H1 (cell line): ENCODE measurements at regions of chr20 and their contacts with region 1.

Region 1: DNA sequence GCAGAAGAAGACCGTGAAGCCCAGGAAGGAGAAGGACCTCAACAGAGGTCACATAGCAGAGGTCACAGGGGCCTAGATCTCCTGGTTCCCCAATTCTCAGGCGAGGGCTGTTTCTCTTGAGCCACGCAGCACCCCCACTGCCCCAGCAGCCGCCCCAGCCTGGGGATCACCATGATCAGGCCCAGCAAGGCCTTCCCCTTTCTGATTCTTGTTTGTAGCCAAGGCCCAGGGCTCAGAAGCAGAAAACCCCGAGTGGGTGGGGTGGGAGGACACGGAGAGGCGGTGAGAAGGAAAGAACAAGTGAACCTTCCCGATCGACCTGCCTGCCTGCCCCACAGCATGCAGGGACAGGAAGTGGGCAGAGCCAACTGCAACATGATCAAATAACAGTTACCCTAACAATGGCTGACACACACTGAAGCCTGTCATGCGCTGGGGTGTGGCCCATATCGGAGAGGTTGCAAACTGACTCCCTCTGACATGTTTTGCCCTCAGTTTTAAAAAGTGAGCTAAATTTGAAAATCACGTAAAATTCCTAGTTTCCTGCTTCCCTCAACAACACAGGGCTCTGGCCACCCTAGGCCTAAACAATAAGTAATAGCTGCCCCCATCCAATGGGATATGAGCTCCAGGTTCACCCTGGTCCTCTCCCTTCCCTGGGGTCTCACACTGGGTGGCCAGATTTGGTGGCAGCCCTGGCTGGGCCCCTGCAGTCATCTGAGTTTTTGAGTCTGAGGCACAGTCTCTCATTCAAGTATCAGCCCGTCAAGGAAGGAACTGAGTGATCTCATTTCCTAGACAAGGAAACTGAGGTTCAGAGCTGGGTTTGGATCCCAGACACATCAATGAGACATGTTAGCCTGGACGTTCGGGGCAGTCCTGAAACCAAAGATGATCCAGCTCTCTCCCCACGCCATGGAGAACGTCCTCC is 6.5 kb downstream of the PEDS1 start:
- DNase-seq: no peak
- H3K4me3 ChIP-seq: no peak overlapping the region
- H3K27ac ChIP-seq: peak overlapping the region; percentile 56
- H3K4me1 ChIP-seq: peaks cover 14 to 26% (median 19%) of the 10 kb centered on the region in 4 experiments
- H3K27me3 ChIP-seq: no peaks in the 10 kb centered on the region
- CTCF ChIP-seq: no peak
- EP300 ChIP-seq: no peak
- POLR2A ChIP-seq: no peak
- RAD21 ChIP-seq: no peak

Region 2: DNA sequence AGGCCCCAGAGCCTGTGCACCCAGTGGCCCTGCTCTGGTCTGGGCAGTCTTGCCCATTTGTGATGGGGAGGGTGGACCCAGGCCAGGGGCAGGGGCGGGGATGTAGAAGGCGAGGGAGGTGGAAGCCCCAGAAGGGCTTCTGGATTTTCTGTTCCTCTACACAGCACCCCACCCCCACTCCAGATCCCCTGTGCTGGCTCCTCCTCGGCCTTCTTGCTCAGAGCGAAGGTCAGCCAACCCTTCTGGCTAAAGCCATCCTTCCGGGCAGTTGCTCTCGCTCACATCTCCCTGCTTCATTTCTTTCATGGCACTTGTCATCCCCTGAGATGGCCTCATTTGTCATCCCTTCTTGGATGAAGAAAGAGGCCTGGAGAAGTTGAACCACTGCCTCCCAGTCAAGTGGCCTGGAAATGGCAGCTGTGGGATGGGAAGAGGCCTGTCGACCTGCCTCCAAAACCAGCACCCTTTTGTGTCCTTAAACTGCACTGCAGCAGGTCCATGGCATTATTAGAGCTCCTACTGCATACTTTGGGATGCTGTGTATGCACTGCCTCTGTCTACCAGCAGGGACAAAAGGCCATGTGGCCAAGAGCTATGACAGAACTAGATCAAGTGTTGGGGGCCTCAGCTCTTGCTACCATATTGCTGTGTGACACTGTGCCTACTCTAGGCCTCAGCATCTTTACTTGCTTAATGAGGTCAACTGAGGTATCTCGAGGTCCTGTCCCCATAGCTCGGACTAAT is 13.4 kb before region 1 on chr20:
- CTCF ChIA-PET with region 1: interaction called, 28 read pairs
- POLR2A ChIA-PET with region 1: interaction called, 40 read pairs
- DNase-seq: no peak
- H3K4me3 ChIP-seq: no peak overlapping the region
- H3K27ac ChIP-seq: no peak overlapping the region
- H3K4me1 ChIP-seq: peaks cover 0 to 2% (median 0%) of the 10 kb centered on the region in 4 experiments; a peak in 1 of 7 replicates
- H3K27me3 ChIP-seq: no peaks in the 10 kb centered on the region
- CTCF ChIP-seq: peak in 1 of 3 experiments; percentile 27; a peak in 1 of 4 replicates
- EP300 ChIP-seq: no peak
- POLR2A ChIP-seq: no peak
- RAD21 ChIP-seq: no peak

Region 3: DNA sequence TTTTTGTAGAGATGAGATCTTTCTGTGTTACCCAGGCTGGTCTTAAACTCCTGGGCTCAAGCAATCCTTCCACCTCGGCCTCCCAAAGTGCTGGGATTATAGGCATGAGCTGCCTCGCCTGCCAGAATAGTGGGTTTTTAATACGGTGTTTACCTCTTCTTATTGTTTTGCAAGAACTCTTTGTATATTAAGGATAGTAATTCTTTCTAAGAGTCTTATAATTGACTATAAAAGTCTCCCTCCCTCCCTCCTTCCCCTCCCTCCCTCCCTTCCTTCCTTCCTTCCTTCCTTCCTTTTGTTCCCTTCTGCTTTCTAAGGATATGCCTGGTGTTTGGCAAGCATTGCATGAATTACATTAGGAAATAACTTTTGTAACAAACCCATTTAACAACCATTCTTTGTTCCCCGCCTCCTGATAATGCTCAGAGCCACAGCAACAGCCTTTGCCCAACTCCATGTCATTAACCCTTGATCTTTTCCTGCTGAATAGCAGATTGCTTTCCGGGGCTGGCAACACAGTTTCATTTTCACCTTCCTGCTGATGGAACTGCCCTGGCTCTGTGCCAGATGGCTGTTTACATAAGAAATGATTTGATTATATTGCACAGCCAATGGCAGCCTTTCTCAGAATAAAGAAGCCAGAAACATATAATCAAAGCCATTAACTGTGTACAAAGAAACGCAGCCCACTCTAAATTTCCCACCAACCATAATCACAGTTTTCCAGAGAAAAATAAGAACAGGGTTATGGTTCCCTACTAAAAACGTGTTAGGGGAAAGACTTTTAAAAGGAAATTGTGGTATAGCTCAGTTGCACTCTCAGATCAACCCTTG is 219.5 kb after region 1 on chr20:
- CTCF ChIA-PET with region 1: no interaction called
- POLR2A ChIA-PET with region 1: no interaction called
- DNase-seq: no peak
- H3K4me3 ChIP-seq: no peak overlapping the region
- H3K27ac ChIP-seq: no peak overlapping the region
- H3K4me1 ChIP-seq: no peaks in the 10 kb centered on the region
- H3K27me3 ChIP-seq: no peaks in the 10 kb centered on the region
- CTCF ChIP-seq: no peak
- EP300 ChIP-seq: no peak
- POLR2A ChIP-seq: no peak
- RAD21 ChIP-seq: no peak